ENCODE measurements at regions of chr22 and their contacts with region 1.

Region 1: GRCh38 chr22:27523711-27524110 is 277.8 kb downstream of the MN1 start:
- DNase-seq: no peak

Region 2: GRCh38 chr22:27573280-27574001 is 49.7 kb after region 1 on chr22:
- intact Hi-C with region 1: loop called in 1 of 2 experiments (anchors 1 kb)
- DNase-seq: no peak